ENCODE measurements at regions of chr16 and their contacts with region 1.

Region 1: GRCh38 chr16:76351441-76351840 is 74.2 kb downstream of the CNTNAP4 start:
- DNase-seq: no peak
- ATAC-seq: no peak

Region 2: DNA sequence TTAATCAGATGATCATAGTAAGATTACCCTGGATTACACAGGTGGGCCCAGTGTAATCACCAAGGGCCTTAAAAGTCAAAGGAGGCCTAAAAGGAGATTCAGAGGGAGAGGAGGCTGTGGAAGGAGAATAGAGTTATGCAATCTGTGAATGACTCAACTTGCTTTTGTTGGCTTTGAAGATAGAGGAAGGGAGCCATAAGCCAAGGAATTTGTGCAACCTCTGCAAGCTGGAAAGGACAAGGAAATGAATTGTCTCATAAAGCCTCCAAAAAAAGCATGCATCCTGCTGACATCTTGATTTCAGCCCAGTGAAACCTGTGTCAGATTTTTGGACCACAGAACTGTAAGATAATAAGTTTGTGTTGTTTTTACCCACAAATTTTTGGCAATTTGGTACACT is 35.3 kb after region 1 on chr16:
- intact Hi-C with region 1: loop called in 1 of 2 experiments (anchors 2 kb)
- DNase-seq: no peak
- ATAC-seq: peak in 1 of 2 donors; percentile 86

Region 3: DNA sequence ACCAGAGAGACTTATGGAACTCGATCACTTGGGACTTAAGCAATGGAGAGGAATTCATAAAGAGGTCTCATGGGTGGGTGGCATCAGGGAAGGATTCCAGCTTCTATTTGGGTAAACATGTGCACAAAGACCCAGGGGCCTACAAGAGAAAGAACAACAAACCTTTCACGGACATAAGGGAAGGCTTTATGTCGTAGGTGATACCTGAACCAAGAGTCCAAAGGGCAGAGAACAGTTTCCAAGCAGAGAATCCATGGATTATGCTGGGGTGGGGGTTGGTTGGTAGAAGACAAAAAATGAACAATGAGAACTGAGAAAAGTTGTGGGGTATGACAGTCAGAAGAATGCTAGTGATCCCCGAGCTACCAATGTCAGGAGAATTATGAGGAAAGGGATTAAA is 45.5 kb after region 1 on chr16:
- intact Hi-C with region 1: no loop called
- DNase-seq: no peak
- ATAC-seq: no peak